ENCODE measurements at regions of chr6 and their contacts with region 1.

Region 1: GRCh38 chr6:47309291-47310130 is at the start of gene TNFRSF21:
- ATAC-seq: peak; percentile 92 to 96 (median 95)
- H3K4me3 ChIP-seq: peak within 1 kb of the TSS; percentile 61 to 81 (median 73)
- H3K27ac ChIP-seq: peak within 1 kb of the TSS; percentile 34 to 88
- H3K4me1 ChIP-seq: peaks cover 0 to 17% of the 10 kb centered on the region in 2 donors
- total RNA-seq, gene TNFRSF21: 1.2 to 50.1 (median 17.2) TPM

Region 2: DNA sequence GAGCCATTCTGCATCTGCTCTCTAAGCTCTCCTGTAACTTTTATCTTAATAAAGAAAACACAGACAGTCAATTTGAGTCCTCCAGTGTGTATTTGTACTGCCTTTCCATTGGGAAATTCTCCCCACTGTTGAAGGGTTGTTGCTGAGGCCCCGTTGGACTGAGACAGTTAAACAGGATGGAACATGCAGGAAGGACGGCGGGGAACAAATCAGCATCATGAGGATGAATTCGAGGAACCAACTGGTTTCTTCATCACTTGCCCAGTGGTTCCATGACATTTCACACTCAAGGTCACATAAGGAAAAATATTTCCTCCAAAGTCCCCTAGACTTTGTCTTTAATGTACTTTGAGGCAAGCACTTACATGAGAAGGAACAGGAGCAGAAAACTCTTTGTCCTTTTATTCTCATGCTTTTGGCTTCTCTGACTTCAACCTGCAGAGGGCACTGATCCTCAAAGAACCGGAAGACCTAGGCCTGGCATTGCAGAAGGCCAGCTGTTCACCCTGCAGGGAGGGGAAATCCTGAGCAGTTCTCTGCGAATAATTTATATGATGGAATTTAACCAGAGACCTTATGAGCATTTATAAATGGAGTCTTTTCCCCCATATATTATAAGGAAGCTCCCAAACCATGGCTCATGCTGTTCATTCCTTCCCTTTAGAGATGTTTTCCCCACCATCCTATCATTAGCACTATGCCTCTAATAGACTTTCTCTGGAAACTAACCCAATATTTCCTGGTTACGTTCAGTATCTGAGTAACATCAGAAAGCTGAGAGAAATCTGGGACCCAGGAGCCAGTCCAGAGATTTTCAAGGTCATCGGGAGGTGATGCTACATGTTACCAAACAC is 212.2 kb before region 1 on chr6:
- in situ Hi-C with region 1: loop called in 7 of 9 experiments (anchors 10 to 25 kb)
- ATAC-seq: peak; percentile 96 to 99 (median 98)
- H3K4me3 ChIP-seq: no peak overlapping the region
- H3K27ac ChIP-seq: no peak overlapping the region
- H3K4me1 ChIP-seq: peaks cover 0 to 2% of the 10 kb centered on the region in 2 donors

Region 3: GRCh38 chr6:47103931-47104330 is 205.6 kb before region 1 on chr6:
- in situ Hi-C with region 1: loop called in 7 of 9 experiments (anchors 10 to 25 kb)
- ATAC-seq: peak in 2 of 8 experiments; percentile 51 to 54
- H3K4me3 ChIP-seq: no peak overlapping the region
- H3K27ac ChIP-seq: no peak overlapping the region
- H3K4me1 ChIP-seq: no peaks in the 10 kb centered on the region

Measured in motor neuron (in vitro differentiated cells).